ENCODE measurements at regions of chr12 and their contacts with region 1.

Region 1: DNA sequence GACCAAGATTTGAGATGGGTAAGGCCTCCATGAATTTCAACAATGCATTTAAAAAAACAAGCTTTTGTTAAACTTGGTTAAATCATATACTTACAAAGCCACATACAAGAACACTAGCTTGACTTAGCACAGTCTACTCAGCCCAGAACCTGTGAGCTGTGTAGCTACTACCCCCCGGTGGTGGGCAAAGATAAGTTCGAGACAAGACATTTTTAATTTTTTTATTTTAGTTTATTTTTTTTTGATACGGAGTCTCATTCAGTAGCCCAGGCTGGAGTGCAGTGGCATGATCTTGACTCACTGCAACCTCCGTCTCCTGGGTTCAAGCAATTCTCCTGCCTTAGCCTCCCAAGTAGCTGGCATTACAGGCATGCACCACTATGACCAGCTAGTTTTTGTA is 3.7 kb upstream of the NECAP1 start:
- DNase-seq: peak; percentile 29
- ATAC-seq: peak; percentile 29; the same call in 1 of the 2 replicates
- H3K4me3 ChIP-seq: no peak overlapping the region
- H3K27ac ChIP-seq: no peak overlapping the region
- H3K4me1 ChIP-seq: peaks cover 29% of the 10 kb centered on the region
- H3K27me3 ChIP-seq: no peaks in the 10 kb centered on the region
- CTCF ChIP-seq: peak; percentile 38; the same call in 1 of the 2 replicates

Region 2: GRCh38 chr12:8032242-8033152 is 45.9 kb before region 1 on chr12 and contains the start of gene FOXJ2:
- CTCF ChIA-PET with region 1: interaction called, 3 read pairs
- POLR2A ChIA-PET with region 1: no interaction called
- intact Hi-C with region 1: loop called (anchors 5 kb)
- DNase-seq: peak; percentile 69
- ATAC-seq: peak; percentile 90
- H3K4me3 ChIP-seq: peak within 1 kb of the TSS; percentile 88
- H3K27ac ChIP-seq: no peak within 1 kb of the TSS
- H3K4me1 ChIP-seq: peaks cover 24% of the 10 kb centered on the region
- H3K27me3 ChIP-seq: no peaks in the 10 kb centered on the region
- CTCF ChIP-seq: no peak
- total RNA-seq, gene FOXJ2: 6.9 and 10.0 TPM in 2 replicates

Region 3: DNA sequence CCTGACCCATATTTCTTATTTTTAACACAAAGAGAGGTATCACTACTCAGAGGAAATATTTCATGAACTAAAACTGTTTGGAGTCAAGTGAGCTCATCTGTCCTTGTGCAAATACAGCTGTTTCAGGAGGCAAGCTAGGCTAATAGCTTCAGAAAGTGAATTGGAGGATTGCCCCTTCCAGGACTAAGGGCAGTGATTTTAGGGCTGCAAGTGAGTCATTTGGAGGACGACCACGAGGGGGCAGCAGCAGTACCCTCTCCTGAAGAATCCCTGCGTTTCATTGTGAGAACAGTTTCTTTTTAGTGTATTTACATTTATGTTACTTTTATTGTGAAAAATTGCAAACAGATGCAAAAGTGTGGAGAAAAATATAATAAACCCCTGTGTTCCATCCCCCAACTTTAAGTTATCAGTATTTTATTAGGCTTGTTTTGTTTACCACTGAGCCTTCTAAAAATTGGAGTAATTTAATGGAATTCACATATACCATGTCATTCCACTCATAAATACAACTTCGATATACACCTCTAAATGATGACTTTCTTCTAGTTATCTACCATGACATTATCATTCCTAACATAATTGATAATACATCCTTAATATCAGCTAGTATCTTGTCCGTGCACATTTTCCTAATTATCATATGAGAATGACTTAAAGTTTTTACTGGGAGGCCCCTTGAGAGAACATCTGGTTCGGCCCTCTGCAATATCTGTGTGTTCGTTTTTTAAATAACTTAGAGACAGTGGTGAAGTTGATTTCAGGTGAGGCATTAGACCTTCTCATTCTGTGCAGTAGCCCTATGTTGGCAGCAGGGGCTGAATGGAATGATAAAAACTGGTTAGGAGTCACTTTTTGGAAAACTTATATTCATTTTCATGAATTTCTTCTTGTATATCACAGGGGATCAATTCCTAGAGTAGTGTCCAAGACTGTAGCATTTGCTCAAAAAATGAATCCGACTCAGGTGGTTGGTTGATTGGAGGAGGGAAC is 32.1 kb before region 1 on chr12:
- CTCF ChIA-PET with region 1: interaction called, 23 read pairs
- POLR2A ChIA-PET with region 1: no interaction called
- intact Hi-C with region 1: loop called (anchors 1 kb)
- DNase-seq: peak; percentile 68
- ATAC-seq: peak; percentile 71
- H3K4me3 ChIP-seq: no peak overlapping the region
- H3K27ac ChIP-seq: no peak overlapping the region
- H3K4me1 ChIP-seq: no peaks in the 10 kb centered on the region
- H3K27me3 ChIP-seq: no peaks in the 10 kb centered on the region
- CTCF ChIP-seq: peak; percentile 77

Measured in PC-3 (cell line).